ENCODE measurements at regions of chr19 and their contacts with region 1.

Region 1: GRCh38 chr19:41563854-41564514 is 12.0 kb upstream of the CEACAM21 start:
- DNase-seq: peak; percentile 48
- ATAC-seq: 0 out of 2 replicates have a peak, but pooled peaks have one; percentile 8
- H3K4me3 Mint-ChIP-seq: peak overlapping the region; percentile 72
- H3K27ac Mint-ChIP-seq: no peak overlapping the region
- H3K4me1 Mint-ChIP-seq: peaks cover 15% of the 10 kb centered on the region
- H3K27me3 Mint-ChIP-seq: peaks cover 95% of the 10 kb centered on the region
- CTCF ChIP-seq: no peak

Region 2: GRCh38 chr19:41321600-41322270 is 242.2 kb before region 1 on chr19:
- CTCF ChIA-PET with region 1: interaction called, 10 read pairs
- POLR2A ChIA-PET with region 1: no interaction called
- DNase-seq: peak; percentile 70
- ATAC-seq: peak; percentile 60
- H3K4me3 Mint-ChIP-seq: no peak overlapping the region
- H3K27ac Mint-ChIP-seq: no peak overlapping the region
- H3K4me1 Mint-ChIP-seq: peaks cover 43% of the 10 kb centered on the region
- H3K27me3 Mint-ChIP-seq: no peaks in the 10 kb centered on the region; the same call in 1 of the 2 replicates
- CTCF ChIP-seq: peak; percentile 37; the same call in 1 of the 2 replicates

Region 3: DNA sequence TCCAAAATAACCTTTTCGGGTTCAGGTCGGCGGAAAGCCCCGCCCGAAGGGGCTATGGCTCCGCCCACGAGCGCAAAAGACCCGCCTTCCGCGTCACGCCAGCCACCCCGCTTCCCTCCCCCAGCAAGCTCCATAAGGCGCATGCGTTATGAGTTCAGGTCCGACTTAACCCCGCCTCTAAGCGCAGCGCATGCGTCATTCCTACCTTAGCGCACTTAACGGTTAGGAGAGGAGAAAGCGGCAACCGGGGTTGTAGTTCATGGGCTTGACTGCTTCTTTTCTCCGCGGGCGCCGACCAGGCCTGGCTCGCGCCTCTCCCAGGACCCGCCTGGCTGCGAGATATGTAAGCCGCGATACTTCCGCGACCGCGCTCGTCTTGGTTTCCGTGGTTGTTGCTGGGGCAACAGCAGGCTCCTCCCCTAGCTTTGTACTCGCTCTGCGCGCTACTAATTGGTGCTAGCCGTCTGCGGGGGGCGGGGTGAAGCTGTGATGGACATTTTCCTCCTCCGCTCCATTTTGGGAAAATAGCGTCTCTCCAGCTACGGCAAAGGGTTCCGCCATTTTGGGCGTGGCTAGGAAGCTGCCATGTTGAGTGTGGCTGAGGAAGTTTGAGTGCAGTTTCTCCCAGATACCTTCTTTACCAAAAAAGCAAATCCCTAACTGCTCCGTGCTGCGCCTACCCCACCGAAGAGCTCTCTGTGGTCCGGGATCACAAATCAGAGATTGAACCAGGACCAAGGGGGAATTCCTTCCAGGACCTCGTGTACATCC is 200.0 kb before region 1 on chr19 and contains the start of gene B9D2:
- CTCF ChIA-PET with region 1: interaction called, 22 read pairs
- POLR2A ChIA-PET with region 1: no interaction called
- DNase-seq: peak; percentile 98
- ATAC-seq: peak; percentile 96
- H3K4me3 Mint-ChIP-seq: peak within 1 kb of the TSS; percentile 90
- H3K27ac Mint-ChIP-seq: peak within 1 kb of the TSS; percentile 97
- H3K4me1 Mint-ChIP-seq: peaks cover 6% of the 10 kb centered on the region; the same call in 1 of the 2 replicates
- H3K27me3 Mint-ChIP-seq: no peaks in the 10 kb centered on the region
- CTCF ChIP-seq: no peak
- total RNA-seq, gene B9D2: 4.5 to 6.3 TPM (median 4.7 TPM) in 3 replicates

Region 4: DNA sequence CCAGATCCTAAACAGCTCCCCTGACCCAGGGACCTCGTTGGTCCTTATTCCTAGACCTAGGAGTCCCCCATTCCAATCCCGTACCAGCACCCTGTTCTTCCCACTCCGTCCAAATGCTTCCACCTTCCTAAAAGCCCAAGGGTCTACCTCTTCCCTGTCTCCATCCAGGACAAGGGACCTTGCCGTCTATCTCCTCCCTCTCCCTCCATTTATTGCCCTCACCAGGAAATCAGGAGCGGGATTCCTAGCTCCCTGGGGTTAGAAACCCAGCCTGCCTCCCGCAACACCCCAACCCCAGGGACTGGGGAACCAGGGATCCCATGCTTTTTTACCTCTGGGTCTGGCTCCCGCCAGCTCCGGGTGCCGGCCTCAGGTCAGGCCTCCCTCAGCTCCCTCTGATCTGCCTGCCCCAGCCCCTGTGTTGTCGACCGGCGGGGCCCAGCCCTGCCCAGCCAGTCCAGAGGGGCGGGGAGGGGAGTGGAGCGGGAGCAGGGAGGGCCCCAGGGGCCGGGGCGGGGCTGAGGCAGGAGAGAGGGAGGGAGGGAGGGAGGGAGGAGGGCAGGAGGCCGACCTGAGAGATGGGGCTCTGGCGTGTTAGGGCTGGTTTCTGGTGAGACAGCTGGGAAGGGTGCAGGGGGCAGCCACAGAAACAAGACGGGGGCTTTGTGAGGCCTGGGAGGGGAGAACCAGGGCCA is 136.9 kb before region 1 on chr19 and contains the start of gene B3GNT8:
- CTCF ChIA-PET with region 1: interaction called, 25 read pairs
- POLR2A ChIA-PET with region 1: no interaction called
- DNase-seq: peak; percentile 89
- ATAC-seq: peak; percentile 89
- H3K4me3 Mint-ChIP-seq: peak within 1 kb of the TSS; percentile 84
- H3K27ac Mint-ChIP-seq: peak within 1 kb of the TSS; percentile 95
- H3K4me1 Mint-ChIP-seq: peaks cover 21% of the 10 kb centered on the region
- H3K27me3 Mint-ChIP-seq: no peaks in the 10 kb centered on the region
- CTCF ChIP-seq: no peak
- total RNA-seq, gene B3GNT8: 0.96 to 2.3 TPM (median 1.2 TPM) in 3 replicates

Region 5: GRCh38 chr19:41449079-41449864 is 114.7 kb before region 1 on chr19:
- CTCF ChIA-PET with region 1: interaction called, 310 read pairs
- POLR2A ChIA-PET with region 1: no interaction called
- DNase-seq: peak; percentile 89
- ATAC-seq: peak; percentile 94
- H3K4me3 Mint-ChIP-seq: peak overlapping the region; percentile 70
- H3K27ac Mint-ChIP-seq: no peak overlapping the region
- H3K4me1 Mint-ChIP-seq: peaks cover 3% of the 10 kb centered on the region
- H3K27me3 Mint-ChIP-seq: peaks cover 62% of the 10 kb centered on the region
- CTCF ChIP-seq: peak; percentile 96

Region 6: GRCh38 chr19:41541990-41542584 is 21.9 kb before region 1 on chr19:
- CTCF ChIA-PET with region 1: interaction called, 56 read pairs
- POLR2A ChIA-PET with region 1: no interaction called
- DNase-seq: peak; percentile 81
- ATAC-seq: peak; percentile 55
- H3K4me3 Mint-ChIP-seq: no peak overlapping the region
- H3K27ac Mint-ChIP-seq: no peak overlapping the region
- H3K4me1 Mint-ChIP-seq: peaks cover 19% of the 10 kb centered on the region
- H3K27me3 Mint-ChIP-seq: peaks cover 27% of the 10 kb centered on the region
- CTCF ChIP-seq: peak; percentile 62

Region 7: GRCh38 chr19:41597600-41598041 is 33.6 kb after region 1 on chr19:
- CTCF ChIA-PET with region 1: interaction called, 16 read pairs
- POLR2A ChIA-PET with region 1: no interaction called
- DNase-seq: peak; percentile 80
- ATAC-seq: peak; percentile 84
- H3K4me3 Mint-ChIP-seq: no peak overlapping the region
- H3K27ac Mint-ChIP-seq: no peak overlapping the region
- H3K4me1 Mint-ChIP-seq: peaks cover 16% of the 10 kb centered on the region
- H3K27me3 Mint-ChIP-seq: peaks cover 78% of the 10 kb centered on the region
- CTCF ChIP-seq: peak; percentile 96

Region 8: GRCh38 chr19:41657157-41657556 is 93.2 kb after region 1 on chr19:
- CTCF ChIA-PET with region 1: no interaction called
- POLR2A ChIA-PET with region 1: no interaction called
- DNase-seq: no peak
- ATAC-seq: no peak; the same call in 1 of the 2 replicates
- H3K4me3 Mint-ChIP-seq: no peak overlapping the region
- H3K27ac Mint-ChIP-seq: no peak overlapping the region
- H3K4me1 Mint-ChIP-seq: peaks cover 24% of the 10 kb centered on the region
- H3K27me3 Mint-ChIP-seq: peaks cover 38% of the 10 kb centered on the region
- CTCF ChIP-seq: no peak

Measured in WTC11 (cell line).